Activated T-helper 2 cell treated with anti-CD3 and anti-CD28 coated beads, Interferon-gamma antibody, Interleukin-2, Interleukin-4, amounts not matched to agents 10 μg/mL and 5 μg/mL and 100 μg/mL, durations not matched to agents 14 hours and 24 hours and 36 hours (primary cell): ENCODE measurements at regions of chr16 and their contacts with region 1.

Region 1: GRCh38 chr16:68448360-68448970 is at the start of gene SMPD3:
- DNase-seq: peak; percentile 96
- H3K4me3 Mint-ChIP-seq: peak within 1 kb of the TSS; percentile 63
- H3K27ac Mint-ChIP-seq: no peak within 1 kb of the TSS
- H3K4me1 Mint-ChIP-seq: peaks cover 4% of the 10 kb centered on the region
- H3K27me3 Mint-ChIP-seq: peaks cover 35% of the 10 kb centered on the region
- total RNA-seq, gene SMPD3: 0.07 and 0.25 TPM in 2 replicates

Region 2: GRCh38 chr16:68237243-68238028 is 211.0 kb before region 1 on chr16:
- intact Hi-C with region 1: loop called (anchors 5 kb)
- DNase-seq: peak; percentile 87
- H3K4me3 Mint-ChIP-seq: peak overlapping the region; percentile 75
- H3K27ac Mint-ChIP-seq: peak overlapping the region; percentile 38
- H3K4me1 Mint-ChIP-seq: peaks cover 27% of the 10 kb centered on the region
- H3K27me3 Mint-ChIP-seq: no peaks in the 10 kb centered on the region

Region 3: DNA sequence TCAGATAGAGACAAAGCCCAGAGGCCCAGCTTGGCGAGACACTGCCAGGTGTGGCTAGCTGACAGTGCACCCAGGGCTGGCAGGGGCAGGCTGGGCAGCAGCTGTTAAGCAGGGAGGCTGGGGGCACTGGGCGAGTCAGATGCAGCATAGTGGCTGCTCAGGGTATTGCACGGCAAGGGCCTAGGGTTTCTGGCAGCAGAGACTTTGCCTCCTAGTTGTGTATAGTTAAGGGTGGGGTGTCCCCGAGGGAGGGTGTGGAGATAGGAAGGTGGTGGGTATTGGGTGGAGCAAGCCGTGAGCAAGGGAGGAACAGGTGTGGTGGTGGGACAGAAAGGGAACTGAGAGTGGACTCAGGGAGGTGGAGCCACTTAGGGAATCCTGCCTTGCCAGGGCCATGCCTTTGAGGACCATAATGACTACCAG is 66.2 kb before region 1 on chr16:
- intact Hi-C with region 1: no loop called
- DNase-seq: no peak
- H3K4me3 Mint-ChIP-seq: no peak overlapping the region
- H3K27ac Mint-ChIP-seq: no peak overlapping the region
- H3K4me1 Mint-ChIP-seq: peaks cover 25% of the 10 kb centered on the region
- H3K27me3 Mint-ChIP-seq: peaks cover 30% of the 10 kb centered on the region

Region 4: GRCh38 chr16:68417711-68418301 is 30.7 kb before region 1 on chr16:
- intact Hi-C with region 1: loop called (anchors 1 kb)
- DNase-seq: peak; percentile 78
- H3K4me3 Mint-ChIP-seq: peak overlapping the region; percentile 48
- H3K27ac Mint-ChIP-seq: peak overlapping the region; percentile 72
- H3K4me1 Mint-ChIP-seq: peaks cover 26% of the 10 kb centered on the region
- H3K27me3 Mint-ChIP-seq: peaks cover 20% of the 10 kb centered on the region

Region 5: GRCh38 chr16:68490829-68491575 is 42.5 kb after region 1 on chr16:
- intact Hi-C with region 1: no loop called
- DNase-seq: no peak
- H3K4me3 Mint-ChIP-seq: no peak overlapping the region
- H3K27ac Mint-ChIP-seq: no peak overlapping the region
- H3K4me1 Mint-ChIP-seq: no peaks in the 10 kb centered on the region
- H3K27me3 Mint-ChIP-seq: peaks cover 14% of the 10 kb centered on the region

Region 6: GRCh38 chr16:68510775-68511174 is 62.3 kb after region 1 on chr16:
- intact Hi-C with region 1: loop called (anchors 2 kb)
- DNase-seq: no peak
- H3K4me3 Mint-ChIP-seq: no peak overlapping the region
- H3K27ac Mint-ChIP-seq: no peak overlapping the region
- H3K4me1 Mint-ChIP-seq: peaks cover 3% of the 10 kb centered on the region
- H3K27me3 Mint-ChIP-seq: peaks cover 19% of the 10 kb centered on the region